ENCODE measurements at regions of chr11 and their contacts with region 1.

Region 1: DNA sequence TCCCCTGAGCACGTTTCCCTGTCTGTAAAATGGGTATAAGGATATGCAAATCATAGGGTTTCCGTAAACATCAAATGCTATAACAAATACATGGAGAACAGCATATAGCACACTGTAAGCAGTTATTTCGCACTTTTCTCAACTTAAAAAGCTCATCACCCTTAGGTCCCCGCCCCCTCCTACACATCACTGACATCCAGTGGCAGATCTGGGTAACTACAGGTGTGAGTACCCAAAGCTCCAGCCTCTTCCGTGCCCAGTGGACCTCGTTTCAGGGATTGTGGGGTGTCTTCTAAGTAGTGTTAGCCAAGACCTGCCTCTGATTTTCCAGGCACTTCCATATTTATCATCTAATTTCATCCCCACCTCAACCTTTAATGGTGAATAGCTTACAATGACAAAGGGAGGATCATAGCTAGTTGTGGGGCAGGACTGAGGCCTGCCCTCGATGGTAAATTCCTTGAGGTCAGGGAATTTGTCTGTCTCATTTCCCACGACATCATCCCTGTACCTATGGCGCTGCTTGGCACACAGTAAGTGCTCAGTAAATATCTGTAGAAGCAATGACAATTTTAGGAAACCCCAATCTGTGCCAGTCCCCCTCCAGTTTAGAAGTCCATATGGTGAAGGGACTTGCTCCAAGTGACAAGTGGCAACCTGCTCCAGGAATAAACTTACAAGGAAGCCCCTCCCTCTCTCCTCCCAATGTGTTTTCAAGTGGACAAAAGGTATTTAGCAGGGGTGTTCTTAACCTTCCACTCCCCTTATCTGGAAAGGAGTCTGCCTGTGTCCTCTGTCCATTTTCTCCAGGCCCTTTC is 340.5 kb downstream of the TENM4 start:
- DNase-seq: peak; percentile 70 to 81
- ATAC-seq: peak; percentile 71 to 95
- H3K4me3 ChIP-seq: no peak overlapping the region
- H3K27ac ChIP-seq: peak overlapping the region in 1 of 2 experiments; percentile 71; a peak in 3 of 6 replicates
- H3K4me1 ChIP-seq: peaks cover 22% of the 10 kb centered on the region
- CTCF ChIP-seq: peak; percentile 74
- EP300 ChIP-seq: no peak
- POLR2A ChIP-seq: no peak
- RAD21 ChIP-seq: peak; percentile 84 to 90

Region 2: DNA sequence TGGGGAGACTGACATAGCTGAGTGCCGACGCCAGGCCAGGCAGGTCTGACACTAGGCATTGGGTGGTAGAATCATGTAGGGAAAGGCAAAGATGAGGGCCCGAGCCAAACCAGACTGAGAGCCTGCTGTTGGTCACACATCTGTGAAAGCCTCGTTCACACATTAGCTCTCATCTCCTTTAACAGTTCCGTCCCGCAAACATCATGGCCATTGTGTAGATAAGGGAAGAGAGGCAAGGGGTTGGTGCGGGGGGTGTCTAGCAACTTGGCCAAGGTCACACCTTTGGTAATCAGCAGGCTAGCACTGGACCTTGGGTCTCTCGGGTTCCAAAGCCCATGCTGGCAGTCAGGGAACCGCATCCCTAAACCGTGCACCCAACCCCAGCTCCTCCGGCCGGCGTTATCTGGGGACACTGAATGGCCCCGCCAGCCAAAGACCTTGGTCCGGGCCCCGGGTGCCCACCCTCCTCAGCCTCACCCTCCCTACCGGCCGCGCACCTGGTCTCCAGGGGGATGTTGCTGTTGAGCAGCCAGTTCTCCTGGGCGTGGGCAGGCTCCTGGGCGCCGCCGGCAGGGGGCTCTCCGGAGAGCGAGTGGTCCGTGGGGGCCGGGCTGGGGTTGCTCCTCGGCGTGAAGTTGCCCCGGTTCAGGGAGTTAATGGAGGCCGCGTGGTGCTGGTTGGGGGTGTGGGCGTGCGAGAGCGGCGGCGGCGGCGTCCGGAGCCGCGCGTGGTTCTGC is 197.4 kb before region 1 on chr11:
- CTCF ChIA-PET with region 1: interaction called, 14 read pairs
- POLR2A ChIA-PET with region 1: no interaction called
- DNase-seq: peak; percentile 3 to 17
- ATAC-seq: peak; percentile 79 to 94
- H3K4me3 ChIP-seq: peak overlapping the region; percentile 42
- H3K27ac ChIP-seq: peak overlapping the region; percentile 57 to 81; a peak in 4 of 6 replicates
- H3K4me1 ChIP-seq: 0 out of 3 replicates have a peak, but pooled peaks cover 3% of the 10 kb centered on the region
- CTCF ChIP-seq: peak; percentile 40
- EP300 ChIP-seq: no peak
- POLR2A ChIP-seq: no peak
- RAD21 ChIP-seq: peak in 1 of 2 experiments; percentile 30; a peak in 1 of 5 replicates

Region 3: GRCh38 chr11:79062814-79063762 is 37.2 kb before region 1 on chr11:
- CTCF ChIA-PET with region 1: interaction called, 11 read pairs
- POLR2A ChIA-PET with region 1: no interaction called
- DNase-seq: peak; percentile 53 to 68
- ATAC-seq: peak; percentile 75 to 93
- H3K4me3 ChIP-seq: no peak overlapping the region
- H3K27ac ChIP-seq: peak overlapping the region; percentile 34 to 78; a peak in 4 of 6 replicates
- H3K4me1 ChIP-seq: peaks cover 23% of the 10 kb centered on the region
- CTCF ChIP-seq: peak; percentile 51
- EP300 ChIP-seq: no peak
- POLR2A ChIP-seq: no peak
- RAD21 ChIP-seq: peak; percentile 62 to 66

Region 4: GRCh38 chr11:79081471-79082031 is 18.8 kb before region 1 on chr11:
- CTCF ChIA-PET with region 1: interaction called, 16 read pairs
- POLR2A ChIA-PET with region 1: interaction called, 4 read pairs
- DNase-seq: no peak
- ATAC-seq: peak in 1 of 2 experiments; percentile 21; a peak in 2 of 6 replicates
- H3K4me3 ChIP-seq: no peak overlapping the region
- H3K27ac ChIP-seq: peak overlapping the region in 1 of 2 experiments; percentile 63; a peak in 3 of 6 replicates
- H3K4me1 ChIP-seq: peaks cover 17% of the 10 kb centered on the region
- CTCF ChIP-seq: no peak
- EP300 ChIP-seq: no peak
- POLR2A ChIP-seq: no peak
- RAD21 ChIP-seq: no peak

Region 5: GRCh38 chr11:79087238-79087960 is 12.9 kb before region 1 on chr11:
- CTCF ChIA-PET with region 1: interaction called, 16 read pairs
- POLR2A ChIA-PET with region 1: interaction called, 4 read pairs
- DNase-seq: peak; percentile 62 to 86
- ATAC-seq: peak; percentile 84 to 89
- H3K4me3 ChIP-seq: 0 out of 3 replicates have a peak overlapping the region, but pooled peaks have one; percentile 11
- H3K27ac ChIP-seq: peak overlapping the region; percentile 89 to 93
- H3K4me1 ChIP-seq: peaks cover 48% of the 10 kb centered on the region
- CTCF ChIP-seq: no peak
- EP300 ChIP-seq: peak; percentile 76 to 78; a peak in 3 of 5 replicates
- POLR2A ChIP-seq: no peak
- RAD21 ChIP-seq: peak in 1 of 2 experiments; percentile 24; a peak in 2 of 5 replicates

Region 6: GRCh38 chr11:79150991-79151390 is 50.7 kb after region 1 on chr11:
- CTCF ChIA-PET with region 1: no interaction called
- POLR2A ChIA-PET with region 1: no interaction called
- DNase-seq: no peak
- ATAC-seq: no peak
- H3K4me3 ChIP-seq: no peak overlapping the region
- H3K27ac ChIP-seq: no peak overlapping the region
- H3K4me1 ChIP-seq: no peaks in the 10 kb centered on the region
- CTCF ChIP-seq: no peak
- EP300 ChIP-seq: no peak
- POLR2A ChIP-seq: no peak
- RAD21 ChIP-seq: no peak

Measured in A549 (cell line).